ENCODE measurements at regions of chr16 and their contacts with region 1.

Region 1: GRCh38 chr16:29700253-29700987 is 21.4 kb downstream of the QPRT start:
- DNase-seq: peak; percentile 85
- H3K4me3 Mint-ChIP-seq: peak overlapping the region; percentile 22
- H3K27ac Mint-ChIP-seq: peak overlapping the region; percentile 70
- H3K4me1 Mint-ChIP-seq: peaks cover 41% of the 10 kb centered on the region
- H3K27me3 Mint-ChIP-seq: no peaks in the 10 kb centered on the region

Region 2: GRCh38 chr16:29641561-29641960 is 58.9 kb before region 1 on chr16:
- CTCF ChIA-PET with region 1: interaction called, 11 read pairs
- POLR2A ChIA-PET with region 1: no interaction called
- DNase-seq: no peak
- H3K4me3 Mint-ChIP-seq: peak overlapping the region; percentile 39
- H3K27ac Mint-ChIP-seq: peak overlapping the region; percentile 81
- H3K4me1 Mint-ChIP-seq: peaks cover 45% of the 10 kb centered on the region
- H3K27me3 Mint-ChIP-seq: no peaks in the 10 kb centered on the region

Region 3: GRCh38 chr16:29673501-29673900 is 26.9 kb before region 1 on chr16:
- CTCF ChIA-PET with region 1: no interaction called
- POLR2A ChIA-PET with region 1: no interaction called
- DNase-seq: no peak
- H3K4me3 Mint-ChIP-seq: no peak overlapping the region
- H3K27ac Mint-ChIP-seq: no peak overlapping the region
- H3K4me1 Mint-ChIP-seq: peaks cover 29% of the 10 kb centered on the region
- H3K27me3 Mint-ChIP-seq: no peaks in the 10 kb centered on the region

Region 4: DNA sequence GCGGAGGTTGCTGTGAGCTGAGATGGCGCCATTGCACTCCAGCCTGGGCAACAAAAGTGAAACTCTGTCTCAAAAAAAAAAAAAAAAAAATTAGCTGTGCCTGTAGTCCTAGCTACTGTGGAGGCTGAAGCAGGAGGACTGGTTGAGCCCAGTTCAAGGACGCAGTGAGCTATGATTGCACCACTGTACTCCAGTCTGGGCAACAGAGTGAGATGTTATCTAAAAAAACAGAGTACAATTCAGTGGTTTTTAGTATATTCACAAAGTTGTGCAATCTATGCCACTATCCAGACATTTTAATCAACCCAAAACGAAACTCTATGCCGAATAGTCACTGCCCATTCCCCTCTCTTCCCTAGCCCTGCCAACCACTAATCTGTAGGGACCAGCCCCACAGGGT is 20.3 kb after region 1 on chr16:
- CTCF ChIA-PET with region 1: interaction called, 42 read pairs
- POLR2A ChIA-PET with region 1: interaction called, 4 read pairs
- DNase-seq: no peak
- H3K4me3 Mint-ChIP-seq: no peak overlapping the region
- H3K27ac Mint-ChIP-seq: no peak overlapping the region
- H3K4me1 Mint-ChIP-seq: peaks cover 6% of the 10 kb centered on the region
- H3K27me3 Mint-ChIP-seq: no peaks in the 10 kb centered on the region

Region 5: GRCh38 chr16:29745853-29746345 is 45.5 kb after region 1 on chr16 and contains the start of gene C16orf54:
- CTCF ChIA-PET with region 1: interaction called, 19 read pairs
- POLR2A ChIA-PET with region 1: interaction called, 32 read pairs
- DNase-seq: peak; percentile 98
- H3K4me3 Mint-ChIP-seq: peak within 1 kb of the TSS; percentile 98
- H3K27ac Mint-ChIP-seq: peak within 1 kb of the TSS; percentile 93
- H3K4me1 Mint-ChIP-seq: peaks cover 67% of the 10 kb centered on the region
- H3K27me3 Mint-ChIP-seq: no peaks in the 10 kb centered on the region
- total RNA-seq, gene C16orf54: 94.6 to 99.2 TPM

Region 6: DNA sequence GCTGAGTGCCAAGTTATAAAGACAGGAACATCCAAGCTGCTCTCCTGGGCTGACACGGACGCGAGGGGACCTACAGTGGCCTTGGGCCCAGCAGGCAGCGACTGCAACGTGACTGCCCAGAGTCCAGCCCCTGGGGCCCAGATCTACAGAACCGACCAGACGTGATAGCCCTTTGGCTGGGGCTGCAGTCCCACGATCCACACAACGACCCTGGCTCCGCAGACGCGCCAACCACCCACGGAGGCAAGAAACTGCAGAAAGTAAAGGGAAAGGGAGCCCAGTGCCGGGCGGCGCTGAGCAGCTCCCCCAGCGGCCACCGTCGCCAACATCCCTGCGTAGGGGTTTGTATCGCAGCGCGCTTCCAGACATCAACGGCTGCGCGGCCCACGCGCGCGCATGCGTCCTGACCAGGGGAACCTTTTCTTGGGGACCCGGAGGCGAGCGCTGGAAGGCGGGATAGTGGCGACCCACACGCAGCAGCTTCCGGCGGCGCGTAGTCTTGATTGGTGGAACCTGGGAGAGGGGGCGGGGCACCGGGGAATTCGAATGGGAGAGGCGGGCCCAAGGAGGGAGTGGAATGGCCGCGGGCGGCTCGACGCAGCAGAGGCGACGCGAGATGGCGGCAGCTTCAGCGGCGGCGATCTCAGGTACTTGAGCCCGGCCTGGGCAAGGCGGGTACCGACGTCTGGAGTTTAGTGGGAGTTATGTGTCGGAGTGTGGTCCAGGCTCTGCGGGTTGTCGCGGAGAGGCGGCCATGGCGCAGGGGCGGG is 89.9 kb after region 1 on chr16 and contains the start of gene KIF22:
- CTCF ChIA-PET with region 1: interaction called, 68 read pairs
- POLR2A ChIA-PET with region 1: interaction called, 69 read pairs
- DNase-seq: peak; percentile 100
- H3K4me3 Mint-ChIP-seq: peak within 1 kb of the TSS; percentile 100
- H3K27ac Mint-ChIP-seq: peak within 1 kb of the TSS; percentile 95
- H3K4me1 Mint-ChIP-seq: peaks cover 48% of the 10 kb centered on the region
- H3K27me3 Mint-ChIP-seq: no peaks in the 10 kb centered on the region
- total RNA-seq, gene KIF22: 187 to 192 TPM

Region 7: DNA sequence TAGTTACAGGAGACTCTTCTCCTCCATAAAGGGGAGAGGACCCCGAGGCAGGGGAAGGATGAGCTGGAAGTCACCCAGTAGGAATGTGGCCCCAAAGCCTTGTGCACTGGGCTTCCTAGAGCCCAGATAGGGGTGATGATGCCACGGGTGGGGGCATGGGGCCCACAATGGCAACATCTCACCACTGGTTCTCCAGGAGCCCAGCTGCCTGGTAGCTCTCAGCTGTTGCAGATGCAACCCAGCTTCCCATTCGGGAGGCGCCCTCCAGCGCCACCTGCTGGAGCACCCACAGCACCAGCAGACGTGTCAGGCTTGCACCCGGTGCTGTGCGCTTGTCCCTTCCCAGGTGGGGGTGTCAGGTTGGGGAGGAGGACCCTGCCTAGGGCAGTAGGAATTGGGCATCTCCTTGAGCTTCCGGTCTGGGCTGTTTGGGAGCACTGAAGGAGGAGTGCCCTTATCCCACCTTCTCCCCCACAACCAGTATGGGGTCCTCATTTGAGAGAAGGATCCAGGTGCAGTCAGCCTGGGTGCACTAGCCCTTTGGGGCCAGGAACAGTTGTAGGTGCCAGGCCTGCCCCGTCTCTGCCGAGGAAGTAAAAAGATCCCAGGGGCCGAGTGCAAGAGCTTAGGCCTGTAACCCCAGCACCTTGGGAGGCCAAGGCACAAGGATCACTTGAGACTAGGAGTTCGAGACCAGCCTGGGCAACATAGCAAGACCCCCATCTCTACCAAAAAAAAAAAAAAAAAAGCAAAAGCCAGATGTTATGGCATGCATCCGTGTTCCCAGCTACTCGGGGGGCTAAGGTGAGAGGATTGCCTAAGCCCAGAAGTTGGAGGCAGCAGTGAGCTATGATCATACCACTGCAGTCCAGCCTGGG is 148.2 kb after region 1 on chr16:
- CTCF ChIA-PET with region 1: interaction called, 72 read pairs
- POLR2A ChIA-PET with region 1: interaction called, 33 read pairs
- DNase-seq: peak; percentile 85
- H3K4me3 Mint-ChIP-seq: no peak overlapping the region
- H3K27ac Mint-ChIP-seq: peak overlapping the region; percentile 63
- H3K4me1 Mint-ChIP-seq: peaks cover 10% of the 10 kb centered on the region
- H3K27me3 Mint-ChIP-seq: no peaks in the 10 kb centered on the region